ENCODE measurements at regions of chr9 and their contacts with region 1.

Region 1: DNA sequence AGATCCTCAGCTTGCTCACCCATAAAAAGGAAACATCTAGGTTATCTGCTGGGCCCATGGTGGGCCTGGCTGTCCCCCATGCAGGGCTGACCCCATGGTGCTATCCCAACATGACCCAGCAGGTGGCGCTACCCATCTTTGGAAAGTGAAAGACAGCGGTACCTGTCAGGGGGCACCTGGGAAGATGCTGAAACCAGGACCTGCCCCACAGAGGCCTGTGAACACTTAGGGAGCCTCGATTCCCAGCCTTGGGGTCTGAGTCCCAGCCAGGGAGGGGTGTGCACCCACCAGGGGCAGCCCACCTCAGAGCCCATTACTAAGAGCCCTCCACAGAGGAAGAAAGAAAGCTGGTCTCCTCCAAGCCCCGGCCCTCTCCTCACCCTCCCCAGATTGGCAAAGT is 46.6 kb upstream of the IPPK start:
- DNase-seq: peak; percentile 74 to 76
- H3K4me3 ChIP-seq: no peak overlapping the region
- H3K27ac ChIP-seq: no peak overlapping the region
- H3K4me1 ChIP-seq: peaks cover 0 to 10% (median 7%) of the 10 kb centered on the region in 4 donors
- H3K27me3 ChIP-seq: no peaks in the 10 kb centered on the region
- CTCF ChIP-seq: peak in 5 of 7 experiments; percentile 81 to 98 (median 87)
- EP300 ChIP-seq: no peak
- POLR2A ChIP-seq: no peak

Region 2: GRCh38 chr9:92254381-92255337 is 461.9 kb before region 1 on chr9:
- intact Hi-C with region 1: no loop called
- DNase-seq: peak in 1 of 2 donors; percentile 14
- H3K4me3 ChIP-seq: no peak overlapping the region
- H3K27ac ChIP-seq: no peak overlapping the region
- H3K4me1 ChIP-seq: no peaks in the 10 kb centered on the region
- H3K27me3 ChIP-seq: no peaks in the 10 kb centered on the region
- CTCF ChIP-seq: no peak
- EP300 ChIP-seq: no peak
- POLR2A ChIP-seq: no peak

Region 3: DNA sequence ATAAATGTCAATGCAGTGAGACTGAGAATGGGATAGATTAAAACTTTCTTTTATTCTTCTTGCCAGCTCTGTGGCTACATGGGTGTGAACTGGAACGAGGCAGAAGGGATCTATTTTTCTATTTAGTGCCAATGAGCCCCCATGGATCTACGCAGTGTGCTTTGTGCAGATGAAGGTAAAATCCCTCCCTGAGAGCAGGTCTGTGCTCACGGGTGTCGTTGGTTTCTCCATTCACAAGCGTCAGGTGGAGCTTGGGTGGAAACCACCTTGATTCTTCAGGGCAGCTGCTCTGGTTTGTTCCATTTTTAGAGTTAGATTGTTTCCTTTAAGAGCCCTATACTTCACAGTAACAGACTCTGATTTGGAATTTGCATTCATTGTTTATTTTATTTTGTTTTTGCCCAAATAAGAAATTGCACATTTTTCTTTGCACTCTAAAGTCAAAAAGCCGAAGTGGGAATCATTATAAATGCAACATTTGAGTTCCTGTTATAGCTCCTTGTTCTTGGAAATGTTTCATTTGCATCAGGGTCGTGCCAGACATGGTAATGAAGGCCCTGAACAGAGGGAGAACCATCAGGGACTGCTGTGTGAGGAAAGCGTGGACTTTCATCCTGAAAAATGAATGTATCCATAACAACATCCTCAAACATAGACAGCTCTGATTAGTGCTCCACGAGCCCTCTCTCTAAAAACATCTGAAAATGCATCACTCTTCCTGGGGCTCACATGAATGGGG is 79.2 kb after region 1 on chr9:
- intact Hi-C with region 1: loop called (anchors 2 kb)
- DNase-seq: no peak
- H3K4me3 ChIP-seq: no peak overlapping the region
- H3K27ac ChIP-seq: no peak overlapping the region
- H3K4me1 ChIP-seq: peaks cover 0 to 4% (median 2%) of the 10 kb centered on the region in 4 donors
- H3K27me3 ChIP-seq: peaks cover 0 to 58% (median 5%) of the 10 kb centered on the region in 3 donors
- CTCF ChIP-seq: no peak
- EP300 ChIP-seq: no peak
- POLR2A ChIP-seq: no peak

Measured in stomach (tissue), 19 donors.